ENCODE measurements at regions of chr6 and their contacts with region 1.

Region 1: DNA sequence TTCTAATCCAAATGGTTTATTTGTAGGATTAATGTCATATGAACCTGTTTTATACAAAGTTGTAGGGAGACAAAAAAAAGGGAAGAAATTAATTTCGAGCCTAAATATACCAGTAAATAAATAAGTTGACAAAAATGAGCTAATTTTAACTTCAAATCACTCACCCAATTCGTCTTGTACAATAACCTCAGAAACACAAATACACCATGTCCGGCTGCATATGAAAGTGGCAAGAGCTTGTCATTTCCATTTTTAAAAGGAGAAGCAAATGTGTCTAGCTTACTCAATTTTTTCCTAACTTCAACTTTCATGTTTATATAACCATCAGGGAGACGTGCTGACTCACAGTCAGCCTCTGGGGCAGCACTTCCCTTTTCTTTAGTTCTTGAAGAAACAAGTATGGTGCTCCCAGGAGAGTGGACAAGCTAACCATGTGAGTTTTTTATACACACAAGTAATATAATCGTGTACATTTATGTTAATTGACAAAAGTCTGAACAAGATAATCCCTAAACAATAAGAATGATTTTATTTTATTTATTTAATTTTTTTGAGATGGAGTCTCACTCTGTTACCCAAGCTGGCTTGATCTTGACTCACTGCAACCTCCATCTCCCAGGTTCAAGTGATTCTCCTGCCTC is 55.5 kb upstream of the SGK1 start:
- H3K4me3 Mint-ChIP-seq: peak overlapping the region; percentile 55
- H3K27ac Mint-ChIP-seq: peak overlapping the region; percentile 93
- H3K4me1 Mint-ChIP-seq: peaks cover 66% of the 10 kb centered on the region
- H3K27me3 Mint-ChIP-seq: no peaks in the 10 kb centered on the region

Region 2: DNA sequence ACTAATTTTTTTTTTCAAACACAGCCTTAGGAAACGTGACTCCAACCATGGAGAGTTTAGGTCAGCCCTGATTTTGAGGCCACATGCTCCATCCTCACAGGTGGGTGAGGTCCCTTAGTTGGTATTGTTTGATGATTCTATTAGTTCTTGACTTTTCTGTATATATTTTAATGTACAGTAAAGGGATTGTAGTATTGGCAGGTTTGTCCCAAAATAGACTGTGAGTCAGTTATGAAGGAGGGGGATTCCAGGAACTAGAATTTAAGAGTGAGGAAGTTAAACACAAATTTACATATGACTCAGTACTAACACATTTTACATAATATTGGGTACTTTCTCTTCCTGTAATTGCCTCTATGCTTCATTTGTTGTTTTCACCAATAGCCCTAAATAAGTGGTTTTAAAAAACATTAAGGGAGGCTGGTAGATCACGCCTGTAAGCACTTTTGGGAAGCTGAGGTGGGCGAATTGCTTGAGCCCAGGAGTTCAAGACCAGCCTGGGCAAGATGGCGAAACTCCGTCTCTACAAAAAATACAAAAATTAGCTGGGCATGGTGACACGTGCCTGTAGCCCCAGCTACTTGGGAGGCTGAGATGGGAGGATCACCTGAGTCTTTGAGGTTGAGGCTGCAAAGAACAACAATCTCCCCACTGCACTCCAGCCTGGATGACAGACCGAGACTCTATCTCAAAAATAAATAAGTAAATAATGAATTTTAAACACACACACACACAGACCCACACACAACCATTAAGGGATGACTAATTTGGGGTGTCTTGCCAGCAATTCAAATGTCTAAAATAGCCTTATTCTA is 137.3 kb before region 1 on chr6:
- intact Hi-C with region 1: loop called (anchors 2 kb)
- H3K4me3 Mint-ChIP-seq: no peak overlapping the region
- H3K27ac Mint-ChIP-seq: peak overlapping the region; percentile 80
- H3K4me1 Mint-ChIP-seq: peaks cover 26% of the 10 kb centered on the region
- H3K27me3 Mint-ChIP-seq: no peaks in the 10 kb centered on the region

Region 3: GRCh38 chr6:134295953-134296553 is 77.3 kb before region 1 on chr6:
- intact Hi-C with region 1: loop called (anchors 10 kb)
- H3K4me3 Mint-ChIP-seq: no peak overlapping the region
- H3K27ac Mint-ChIP-seq: peak overlapping the region; percentile 83
- H3K4me1 Mint-ChIP-seq: peaks cover 42% of the 10 kb centered on the region
- H3K27me3 Mint-ChIP-seq: no peaks in the 10 kb centered on the region

Region 4: GRCh38 chr6:134389129-134389528 is 15.7 kb after region 1 on chr6:
- intact Hi-C with region 1: loop called (anchors 2 kb)
- H3K4me3 Mint-ChIP-seq: no peak overlapping the region
- H3K27ac Mint-ChIP-seq: peak overlapping the region; percentile 25
- H3K4me1 Mint-ChIP-seq: peaks cover 19% of the 10 kb centered on the region
- H3K27me3 Mint-ChIP-seq: no peaks in the 10 kb centered on the region

Region 5: GRCh38 chr6:134640975-134641429 is 267.6 kb after region 1 on chr6:
- intact Hi-C with region 1: loop called (anchors 10 kb)
- H3K4me3 Mint-ChIP-seq: no peak overlapping the region
- H3K27ac Mint-ChIP-seq: peak overlapping the region; percentile 79
- H3K4me1 Mint-ChIP-seq: peaks cover 21% of the 10 kb centered on the region
- H3K27me3 Mint-ChIP-seq: no peaks in the 10 kb centered on the region

Region 6: DNA sequence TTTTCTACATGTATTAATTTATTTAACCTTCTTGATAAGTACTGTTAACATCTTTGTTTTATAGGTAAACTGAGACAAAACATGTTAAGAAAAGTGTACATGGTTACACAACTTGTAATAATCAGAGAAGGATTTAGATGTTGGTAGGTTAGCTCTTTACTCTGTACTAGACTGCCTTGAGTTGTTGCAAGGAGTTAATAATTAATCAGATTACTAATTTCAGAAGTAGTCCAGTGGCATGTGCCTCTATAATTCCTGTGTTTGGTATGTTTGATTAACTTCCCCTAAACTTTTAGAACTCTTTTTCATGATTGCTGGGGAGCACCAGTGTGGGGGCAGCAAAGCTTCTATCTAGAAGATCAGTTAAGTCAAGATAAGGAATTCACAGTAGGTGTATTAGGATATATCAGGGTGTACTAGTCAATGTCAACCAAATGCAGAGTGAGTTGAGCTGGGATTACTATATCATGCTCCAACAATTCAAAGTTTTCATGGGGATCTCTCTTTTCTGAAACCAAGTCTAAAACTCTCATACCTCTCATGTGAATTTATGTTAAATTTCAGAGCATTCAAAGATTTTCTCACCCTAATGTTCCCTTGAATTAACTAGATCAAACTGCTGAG is 1253.8 kb after region 1 on chr6:
- intact Hi-C with region 1: no loop called
- H3K4me3 Mint-ChIP-seq: no peak overlapping the region
- H3K27ac Mint-ChIP-seq: no peak overlapping the region
- H3K4me1 Mint-ChIP-seq: peaks cover 4% of the 10 kb centered on the region
- H3K27me3 Mint-ChIP-seq: no peaks in the 10 kb centered on the region